PC-9 (cell line): ENCODE measurements at regions of chr5 and their contacts with region 1.

Region 1: GRCh38 chr5:140953234-140953633 is 13.0 kb upstream of the PCDHAC2 start:
- DNase-seq: no peak
- H3K4me3 ChIP-seq: no peak overlapping the region
- H3K27ac ChIP-seq: no peak overlapping the region
- H3K4me1 ChIP-seq: no peaks in the 10 kb centered on the region
- H3K27me3 ChIP-seq: no peaks in the 10 kb centered on the region
- CTCF ChIP-seq: no peak

Region 2: GRCh38 chr5:140977003-140977402 is 23.8 kb after region 1 on chr5:
- CTCF ChIA-PET with region 1: no interaction called
- POLR2A ChIA-PET with region 1: no interaction called
- intact Hi-C with region 1: loop called (anchors 1 kb)
- DNase-seq: peak in 1 of 2 experiments; percentile 35
- H3K4me3 ChIP-seq: no peak overlapping the region
- H3K27ac ChIP-seq: 0 out of 2 replicates have a peak overlapping the region, but pooled peaks have one; percentile 28
- H3K4me1 ChIP-seq: no peaks in the 10 kb centered on the region
- H3K27me3 ChIP-seq: no peaks in the 10 kb centered on the region
- CTCF ChIP-seq: no peak